Left cardiac atrium (tissue), 4 donors: ENCODE measurements at regions of chr14 and their contacts with region 1.

Region 1: DNA sequence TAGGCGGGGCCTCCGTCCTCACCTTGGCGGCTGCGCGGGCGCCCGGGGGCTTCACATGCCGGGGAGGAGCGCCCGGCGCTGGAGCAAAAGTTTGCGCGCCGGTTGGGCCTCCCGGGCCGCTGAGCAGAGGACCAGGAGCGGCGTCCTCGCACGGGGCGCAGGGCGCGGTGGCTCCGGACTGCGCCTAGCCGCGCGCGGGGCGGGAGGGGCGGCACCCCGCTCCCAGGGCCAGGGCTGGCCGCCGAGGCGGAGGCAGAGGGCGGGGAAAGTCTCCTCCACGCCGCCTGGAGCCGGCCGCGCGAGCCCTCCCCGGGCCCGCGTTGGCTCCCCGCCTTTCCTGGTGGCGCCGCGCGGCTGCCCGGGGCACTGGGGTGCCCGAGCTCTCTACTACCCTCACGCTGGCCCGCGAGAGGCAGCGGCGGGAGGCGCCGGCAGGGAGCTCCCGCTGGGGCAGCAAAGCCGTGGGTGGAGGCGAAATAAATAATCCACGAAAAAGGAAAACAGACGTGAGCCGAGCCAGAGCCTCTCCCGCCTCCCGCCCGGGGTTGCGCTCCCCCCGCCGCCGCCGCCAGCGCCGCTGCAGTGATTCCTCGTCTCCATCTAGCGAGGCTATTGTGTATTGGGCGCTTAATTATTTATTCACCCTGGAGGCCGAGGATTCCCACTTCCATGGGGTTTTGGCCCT is 400 bp upstream of the PRIMA1 start:
- DNase-seq: peak; percentile 42
- ATAC-seq: peak; percentile 90 to 94

Region 2: GRCh38 chr14:93655078-93655750 is 133.5 kb before region 1 on chr14:
- intact Hi-C with region 1: loop called (anchors 1 to 5 kb)
- DNase-seq: no peak
- ATAC-seq: peak in 1 of 2 donors; percentile 50

Region 3: DNA sequence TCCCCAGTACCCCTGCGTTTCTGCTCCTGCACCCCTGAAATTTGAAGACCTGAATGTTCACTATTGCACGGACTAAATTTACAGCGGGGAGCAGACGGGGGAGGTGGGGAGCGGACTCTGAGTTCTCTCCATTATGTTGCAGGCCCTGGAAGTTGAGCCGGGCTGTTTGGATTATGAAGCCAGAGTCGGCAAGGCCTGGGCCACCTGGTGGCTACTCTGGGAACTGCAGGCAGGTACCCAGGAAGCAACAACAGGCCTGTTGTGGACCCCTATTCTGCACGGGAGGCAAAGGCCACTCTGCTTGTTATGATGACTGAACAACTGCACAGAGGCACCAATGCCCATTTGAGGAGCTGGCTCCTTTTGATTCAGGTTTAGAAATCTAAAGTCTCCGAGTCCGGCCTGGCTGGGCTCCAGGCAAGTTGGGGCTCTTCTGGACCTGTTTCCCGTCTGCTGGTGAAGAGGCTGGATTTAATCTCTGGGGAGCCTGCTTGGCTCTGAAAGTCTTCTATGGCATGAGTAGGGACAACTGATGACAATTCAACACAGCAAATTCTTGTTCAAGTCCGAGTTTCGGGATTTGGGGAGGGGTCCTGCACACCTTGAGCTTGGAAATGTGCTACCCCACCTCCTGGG is 104.4 kb after region 1 on chr14:
- intact Hi-C with region 1: loop called (anchors 5 to 10 kb)
- DNase-seq: peak; percentile 79
- ATAC-seq: peak; percentile 69 to 70